Panc1 (cell line): ENCODE measurements at regions of chr1 and their contacts with region 1.

Region 1: DNA sequence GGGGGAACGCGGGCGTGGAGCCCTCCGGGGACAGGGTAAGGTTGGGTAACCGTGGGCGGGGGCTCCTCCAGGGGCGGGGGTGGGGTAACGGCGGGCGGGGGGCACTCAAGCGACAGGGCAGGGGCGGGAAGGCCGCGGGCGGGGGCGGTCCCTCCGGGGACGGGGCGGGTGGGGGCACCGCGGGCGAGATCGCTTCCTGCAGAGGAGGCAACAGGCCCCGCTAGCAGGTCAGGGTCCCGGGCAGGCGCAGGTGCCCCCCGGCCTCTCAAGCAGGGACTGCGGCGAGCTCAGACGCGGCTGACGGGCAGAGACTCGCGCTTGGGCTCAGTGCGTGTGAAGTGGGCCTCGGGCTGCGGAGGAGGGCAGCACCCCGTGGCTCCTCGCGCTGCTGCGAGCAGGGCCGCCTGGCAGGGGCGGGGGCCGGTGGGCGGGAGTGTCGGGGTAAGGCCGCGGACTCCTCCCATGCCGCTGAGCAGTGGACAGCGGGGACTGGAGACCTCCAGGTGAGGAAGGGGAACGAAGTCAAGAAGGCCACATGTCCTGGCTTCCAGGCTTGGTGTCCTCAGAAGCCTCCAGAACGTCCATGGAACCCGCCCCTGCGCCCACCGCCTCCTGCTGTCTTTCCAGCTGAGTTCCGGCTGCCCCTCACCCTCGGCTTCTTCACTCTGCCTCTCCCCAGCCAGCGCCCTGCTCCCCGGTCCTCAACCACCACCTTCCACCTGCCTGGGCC is 627 bp upstream of the GNB1 start:
- DNase-seq: no peak
- ATAC-seq: peak; percentile 71
- H3K4me3 ChIP-seq: peak overlapping the region; percentile 57 to 80
- H3K27ac ChIP-seq: peak overlapping the region; percentile 51; the same call in 1 of the 2 replicates
- H3K4me1 ChIP-seq: peaks cover 49% of the 10 kb centered on the region
- H3K27me3 ChIP-seq: no peaks in the 10 kb centered on the region
- CTCF ChIP-seq: no peak

Region 2: DNA sequence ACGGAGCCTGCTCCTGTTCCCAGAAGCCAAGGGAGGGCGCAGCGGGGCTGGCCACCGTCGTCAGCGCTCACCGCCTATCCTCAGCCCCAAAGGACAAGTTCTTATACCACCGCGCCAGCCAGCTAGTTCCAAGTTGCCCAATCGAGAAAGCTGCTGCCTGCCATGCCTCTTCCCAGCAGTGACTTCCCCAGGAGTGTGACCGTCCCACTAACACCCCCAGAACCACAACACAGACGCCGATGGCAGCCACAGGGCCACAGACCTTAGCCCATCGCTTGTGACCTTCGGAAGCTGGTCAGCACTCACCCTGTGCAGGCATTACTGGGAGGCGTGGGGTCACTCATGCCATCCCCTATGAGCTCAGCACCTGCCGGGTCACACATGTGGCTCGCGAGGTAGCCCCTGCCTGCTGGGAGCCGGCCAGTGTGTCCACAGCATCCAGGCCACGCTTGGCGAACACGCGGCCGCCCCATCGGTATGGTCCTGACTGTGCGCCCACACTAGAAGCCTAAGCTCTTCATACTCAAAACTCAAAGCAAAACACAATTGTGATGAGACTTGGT is 133.4 kb before region 1 on chr1:
- CTCF ChIA-PET with region 1: no interaction called
- POLR2A ChIA-PET with region 1: interaction called, 10 read pairs
- in situ Hi-C with region 1: no loop called
- intact Hi-C with region 1: no loop called
- DNase-seq: no peak
- ATAC-seq: no peak
- H3K4me3 ChIP-seq: no peak overlapping the region
- H3K27ac ChIP-seq: no peak overlapping the region; the same call in 1 of the 2 replicates
- H3K4me1 ChIP-seq: no peaks in the 10 kb centered on the region
- H3K27me3 ChIP-seq: no peaks in the 10 kb centered on the region
- CTCF ChIP-seq: no peak

Region 3: DNA sequence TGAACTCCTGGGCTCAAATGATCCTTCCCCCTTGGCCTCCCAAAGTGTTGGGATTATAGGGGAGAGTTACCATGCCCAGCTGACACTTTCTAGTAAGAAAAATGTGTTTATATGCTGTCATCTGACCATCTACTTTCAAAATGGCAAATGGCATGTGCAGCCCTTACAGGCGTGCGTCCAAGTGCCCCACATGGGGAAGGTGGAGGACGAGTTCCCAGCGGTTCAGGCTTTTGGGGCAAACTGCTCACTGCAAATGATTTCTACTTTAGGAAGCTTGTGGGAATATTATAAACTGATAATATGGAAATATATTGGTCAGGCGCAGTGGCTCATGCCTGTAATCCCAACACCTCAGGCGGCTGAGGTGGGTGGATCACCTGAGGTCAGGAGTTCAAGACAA is 71.8 kb before region 1 on chr1:
- CTCF ChIA-PET with region 1: no interaction called
- POLR2A ChIA-PET with region 1: no interaction called
- in situ Hi-C with region 1: loop called (anchors 5 kb)
- intact Hi-C with region 1: no loop called
- DNase-seq: no peak
- ATAC-seq: no peak
- H3K4me3 ChIP-seq: no peak overlapping the region
- H3K27ac ChIP-seq: no peak overlapping the region
- H3K4me1 ChIP-seq: no peaks in the 10 kb centered on the region
- H3K27me3 ChIP-seq: no peaks in the 10 kb centered on the region
- CTCF ChIP-seq: no peak

Region 4: GRCh38 chr1:1858382-1859086 is 33.0 kb before region 1 on chr1:
- CTCF ChIA-PET with region 1: interaction called, 14 read pairs
- POLR2A ChIA-PET with region 1: no interaction called
- in situ Hi-C with region 1: no loop called
- intact Hi-C with region 1: no loop called
- DNase-seq: no peak
- ATAC-seq: no peak
- H3K4me3 ChIP-seq: no peak overlapping the region
- H3K27ac ChIP-seq: no peak overlapping the region
- H3K4me1 ChIP-seq: peaks cover 40% of the 10 kb centered on the region
- H3K27me3 ChIP-seq: no peaks in the 10 kb centered on the region
- CTCF ChIP-seq: no peak

Region 5: DNA sequence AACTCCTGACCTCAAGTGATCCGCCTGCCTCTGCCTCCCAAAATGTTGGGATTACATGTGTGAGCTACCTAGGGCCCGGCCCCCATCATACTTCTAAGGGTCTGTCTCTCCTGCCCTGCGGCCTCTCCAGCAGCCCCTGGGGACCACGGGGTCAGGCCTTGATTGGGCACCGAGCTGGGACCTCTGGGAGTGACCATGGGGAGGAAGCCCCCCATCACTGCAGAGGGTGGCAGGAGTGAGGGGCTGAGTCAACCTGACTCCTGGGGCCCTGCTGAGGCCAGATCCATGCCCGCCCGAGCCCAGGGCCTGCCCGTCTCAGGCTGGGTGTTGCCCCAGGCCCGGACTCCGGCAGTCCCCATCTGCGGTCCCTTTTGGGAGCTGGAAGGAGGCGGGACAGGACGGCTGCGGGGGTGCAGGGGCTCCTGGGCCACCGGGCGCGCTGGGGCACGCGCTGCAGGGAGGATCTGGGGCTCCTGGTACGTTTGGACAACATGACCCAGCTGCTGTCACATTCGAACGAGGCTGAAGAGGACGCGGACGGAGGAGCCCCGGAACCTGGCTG is 16.8 kb after region 1 on chr1:
- CTCF ChIA-PET with region 1: interaction called, 3 read pairs
- POLR2A ChIA-PET with region 1: interaction called, 10 read pairs
- in situ Hi-C with region 1: no loop called
- intact Hi-C with region 1: no loop called
- DNase-seq: no peak
- ATAC-seq: peak; percentile 24
- H3K4me3 ChIP-seq: peak overlapping the region; percentile 56 to 62
- H3K27ac ChIP-seq: peak overlapping the region; percentile 79
- H3K4me1 ChIP-seq: peaks cover 25% of the 10 kb centered on the region
- H3K27me3 ChIP-seq: no peaks in the 10 kb centered on the region
- CTCF ChIP-seq: no peak

Region 6: GRCh38 chr1:2127187-2128145 is 236.0 kb after region 1 on chr1:
- CTCF ChIA-PET with region 1: no interaction called
- POLR2A ChIA-PET with region 1: no interaction called
- in situ Hi-C with region 1: no loop called
- intact Hi-C with region 1: no loop called
- DNase-seq: no peak
- ATAC-seq: no peak
- H3K4me3 ChIP-seq: no peak overlapping the region
- H3K27ac ChIP-seq: no peak overlapping the region
- H3K4me1 ChIP-seq: peaks cover 5% of the 10 kb centered on the region
- H3K27me3 ChIP-seq: no peaks in the 10 kb centered on the region
- CTCF ChIP-seq: no peak

Region 7: GRCh38 chr1:2227346-2228153 is 336.0 kb after region 1 on chr1:
- CTCF ChIA-PET with region 1: no interaction called
- POLR2A ChIA-PET with region 1: no interaction called
- in situ Hi-C with region 1: no loop called
- intact Hi-C with region 1: no loop called
- DNase-seq: no peak
- ATAC-seq: peak; percentile 86
- H3K4me3 ChIP-seq: peak overlapping the region; percentile 58 to 61
- H3K27ac ChIP-seq: peak overlapping the region; percentile 71
- H3K4me1 ChIP-seq: peaks cover 12% of the 10 kb centered on the region
- H3K27me3 ChIP-seq: no peaks in the 10 kb centered on the region
- CTCF ChIP-seq: no peak